Ovary (tissue), 10 donors: ENCODE measurements at regions of chr2 and their contacts with region 1.

Region 1: GRCh38 chr2:165874445-165875039 is 79.0 kb downstream of the TTC21B start:
- DNase-seq: no peak
- H3K4me3 ChIP-seq: no peak overlapping the region
- H3K27ac ChIP-seq: no peak overlapping the region
- H3K4me1 ChIP-seq: no peaks in the 10 kb centered on the region
- H3K27me3 ChIP-seq: no peaks in the 10 kb centered on the region
- CTCF ChIP-seq: peak; percentile 39 to 62 (median 49)
- EP300 ChIP-seq: no peak
- POLR2A ChIP-seq: no peak

Region 2: DNA sequence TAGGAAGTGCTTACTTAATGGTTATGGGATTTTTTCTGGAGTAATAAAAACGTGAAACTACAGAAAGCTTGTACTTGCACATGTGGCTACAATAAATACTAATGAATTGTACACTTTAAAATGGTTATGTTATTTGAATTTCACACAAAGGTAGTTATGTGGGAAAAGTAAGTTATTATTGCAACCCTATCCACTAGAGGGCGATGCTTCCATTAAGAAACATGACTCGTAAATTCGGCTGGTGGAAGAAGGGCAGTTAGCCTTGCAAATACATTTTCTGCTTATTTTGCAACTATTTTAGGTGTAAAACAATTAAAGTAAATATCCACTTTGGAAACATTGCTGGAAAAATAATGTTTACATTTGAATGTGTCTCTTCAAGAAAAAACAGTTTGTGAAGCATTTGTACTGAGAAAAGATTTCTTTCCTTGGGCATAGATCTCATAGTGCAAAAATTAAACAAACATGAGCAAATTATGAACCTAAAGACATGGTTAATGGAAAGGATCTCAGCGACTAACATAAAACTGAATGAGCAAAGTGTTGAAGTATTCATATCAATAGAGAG is 473.2 kb before region 1 on chr2:
- intact Hi-C with region 1: loop called in 3 of 4 experiments (anchors 5 to 10 kb)
- DNase-seq: peak in 1 of 5 donors; percentile 30
- H3K4me3 ChIP-seq: no peak overlapping the region
- H3K27ac ChIP-seq: no peak overlapping the region
- H3K4me1 ChIP-seq: no peaks in the 10 kb centered on the region
- H3K27me3 ChIP-seq: no peaks in the 10 kb centered on the region
- CTCF ChIP-seq: peak; percentile 28 to 75 (median 70)
- EP300 ChIP-seq: no peak
- POLR2A ChIP-seq: no peak

Region 3: DNA sequence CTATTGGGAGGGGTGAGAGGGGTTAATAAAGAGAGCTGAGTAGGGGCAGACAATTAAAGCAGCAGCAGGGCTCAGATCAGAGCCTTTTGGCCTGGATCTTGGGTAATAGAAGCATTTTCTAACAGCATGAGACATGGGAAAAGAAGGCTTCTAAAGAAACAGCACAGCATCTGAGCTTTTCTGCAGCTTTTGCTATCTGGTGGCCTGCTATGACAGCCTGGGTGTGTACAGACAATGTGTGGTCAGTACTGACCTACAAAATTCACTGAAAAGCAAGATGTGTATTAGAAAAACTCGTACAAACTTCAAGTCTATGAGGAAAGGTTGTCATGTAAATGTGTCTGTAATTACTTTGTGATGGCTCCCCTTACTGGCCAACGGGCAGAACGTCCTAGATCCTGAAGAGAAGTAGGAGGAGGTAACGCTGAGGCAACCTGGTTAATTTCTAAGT is 176.1 kb before region 1 on chr2:
- intact Hi-C with region 1: loop called in 1 of 4 experiments (anchors 10 kb)
- DNase-seq: peak; percentile 13 to 48 (median 34)
- H3K4me3 ChIP-seq: no peak overlapping the region
- H3K27ac ChIP-seq: no peak overlapping the region
- H3K4me1 ChIP-seq: no peaks in the 10 kb centered on the region
- H3K27me3 ChIP-seq: no peaks in the 10 kb centered on the region
- CTCF ChIP-seq: peak in 1 of 3 donors; percentile 36
- EP300 ChIP-seq: no peak
- POLR2A ChIP-seq: no peak

Region 4: GRCh38 chr2:165803123-165803760 is 71.3 kb before region 1 on chr2:
- intact Hi-C with region 1: no loop called
- DNase-seq: no peak
- H3K4me3 ChIP-seq: no peak overlapping the region
- H3K27ac ChIP-seq: no peak overlapping the region
- H3K4me1 ChIP-seq: peaks cover 3% of the 10 kb centered on the region
- H3K27me3 ChIP-seq: no peaks in the 10 kb centered on the region
- CTCF ChIP-seq: no peak
- EP300 ChIP-seq: no peak
- POLR2A ChIP-seq: no peak

Region 5: DNA sequence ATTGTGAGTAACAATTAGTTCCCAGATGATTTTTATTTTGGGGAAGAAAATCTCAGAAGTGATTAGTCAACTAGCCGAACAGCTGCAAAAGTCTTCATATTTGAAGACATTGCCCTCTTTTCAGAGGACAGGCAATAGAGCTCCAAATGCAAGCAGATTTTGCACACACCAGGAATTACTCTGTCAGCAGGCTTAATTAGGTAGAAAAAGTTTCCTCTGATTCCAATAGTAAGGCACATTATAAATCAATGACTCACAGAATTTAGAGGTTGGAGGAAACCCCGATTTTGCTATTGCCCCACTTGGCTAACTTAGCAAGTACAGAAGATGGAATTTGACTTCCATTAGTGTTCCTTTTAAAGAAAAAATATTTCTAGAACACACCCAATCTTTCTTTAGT is 284.0 kb after region 1 on chr2:
- intact Hi-C with region 1: no loop called
- DNase-seq: no peak
- H3K4me3 ChIP-seq: no peak overlapping the region
- H3K27ac ChIP-seq: no peak overlapping the region
- H3K4me1 ChIP-seq: no peaks in the 10 kb centered on the region
- H3K27me3 ChIP-seq: no peaks in the 10 kb centered on the region
- CTCF ChIP-seq: no peak
- EP300 ChIP-seq: no peak
- POLR2A ChIP-seq: no peak